HAP-1 (cell line): ENCODE measurements at regions of chr15 and their contacts with region 1.

Region 1: GRCh38 chr15:59711451-59712243 is 22.5 kb upstream of the BNIP2 start:
- DNase-seq: no peak
- H3K4me3 ChIP-seq: no peak overlapping the region
- H3K4me1 ChIP-seq: no peaks in the 10 kb centered on the region
- H3K27me3 ChIP-seq: peaks cover 15% of the 10 kb centered on the region

Region 2: DNA sequence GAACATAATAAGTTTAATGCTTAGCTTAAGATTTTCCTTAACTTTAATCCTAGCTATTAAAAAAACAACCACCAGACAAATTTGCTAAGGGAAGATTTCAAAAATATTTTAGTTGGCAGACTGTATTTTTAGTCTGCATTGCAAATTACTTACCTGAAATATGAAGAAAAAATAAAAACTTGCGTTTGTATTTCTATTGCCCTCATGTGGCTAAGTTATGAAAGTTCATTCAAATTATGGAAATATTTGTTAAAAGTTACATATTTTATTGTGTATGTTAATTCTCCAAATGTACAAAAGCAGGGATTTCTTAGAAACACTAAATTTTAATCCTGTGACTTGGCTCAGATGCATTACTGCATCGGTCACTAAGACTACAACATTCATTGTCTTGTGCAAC is 69.3 kb before region 1 on chr15:
- in situ Hi-C with region 1: no loop called
- DNase-seq: no peak
- H3K4me3 ChIP-seq: no peak overlapping the region
- H3K4me1 ChIP-seq: peaks cover 22% of the 10 kb centered on the region
- H3K27me3 ChIP-seq: no peaks in the 10 kb centered on the region

Region 3: GRCh38 chr15:60326824-60327654 is 615.4 kb after region 1 on chr15:
- in situ Hi-C with region 1: loop called (anchors 10 kb)
- DNase-seq: peak; percentile 56 to 71
- H3K4me3 ChIP-seq: no peak overlapping the region
- H3K4me1 ChIP-seq: peaks cover 11% of the 10 kb centered on the region
- H3K27me3 ChIP-seq: peaks cover 48% of the 10 kb centered on the region

Region 4: DNA sequence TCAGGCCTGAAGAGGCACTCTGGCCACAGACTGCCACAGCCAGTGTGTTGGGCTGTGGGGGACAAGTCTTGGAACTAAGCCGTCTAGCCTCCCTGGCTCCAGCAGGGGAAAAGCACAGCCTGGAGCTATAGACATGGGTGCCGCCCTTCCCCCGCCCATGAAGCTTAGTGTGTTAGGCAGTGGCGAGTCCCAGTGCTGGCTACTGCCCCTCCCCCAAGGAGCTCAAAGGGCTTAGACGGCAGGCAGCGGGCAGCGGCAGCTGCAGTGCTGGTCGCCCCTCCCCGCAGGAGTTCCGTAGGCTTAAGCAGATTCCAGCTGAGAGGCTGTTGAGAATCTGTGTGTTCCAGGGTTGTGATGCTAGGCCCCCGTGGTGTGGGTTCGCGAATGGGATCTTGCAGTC is 1653.2 kb after region 1 on chr15:
- in situ Hi-C with region 1: no loop called
- DNase-seq: peak in 1 of 2 experiments; percentile 31
- H3K4me3 ChIP-seq: no peak overlapping the region
- H3K4me1 ChIP-seq: no peaks in the 10 kb centered on the region
- H3K27me3 ChIP-seq: no peaks in the 10 kb centered on the region; the same call in 1 of the 2 replicates